ENCODE measurements at regions of chr5 and their contacts with region 1.

Region 1: DNA sequence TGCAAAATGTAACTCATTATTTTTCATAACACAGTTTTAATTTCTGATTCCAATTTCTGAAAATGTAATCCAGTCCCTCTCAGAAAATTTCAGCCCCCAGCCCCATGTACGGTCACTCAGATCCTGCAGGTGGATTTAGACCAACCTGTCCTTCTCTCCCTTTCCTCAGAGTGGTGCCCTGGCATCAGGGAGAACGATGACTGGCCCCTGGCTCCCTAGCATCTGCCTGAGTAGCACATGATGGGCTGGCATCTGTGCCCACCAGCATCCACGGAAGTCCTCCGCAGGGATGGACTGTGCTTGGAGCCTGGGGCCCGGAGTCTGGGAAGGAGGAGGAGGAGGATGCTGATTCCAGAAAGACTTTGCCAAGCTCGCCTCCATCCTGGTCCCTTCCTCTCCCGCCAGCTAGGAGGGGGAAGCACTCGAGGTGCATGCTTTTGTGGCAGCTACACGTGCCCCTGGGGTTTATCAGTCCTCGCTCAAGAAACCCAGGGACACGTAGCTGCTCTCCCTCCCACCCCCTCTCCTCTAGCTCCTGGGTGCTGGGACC is 54.4 kb upstream of the RUFY1 start:
- DNase-seq: peak in 2 of 3 donors; percentile 15 to 26
- H3K4me3 ChIP-seq: no peak overlapping the region
- H3K27ac ChIP-seq: no peak overlapping the region
- H3K4me1 ChIP-seq: no peaks in the 10 kb centered on the region
- H3K27me3 ChIP-seq: no peaks in the 10 kb centered on the region

Region 2: GRCh38 chr5:179166886-179167841 is 328.8 kb before region 1 on chr5:
- CTCF ChIA-PET with region 1: interaction called, 33 read pairs
- POLR2A ChIA-PET with region 1: no interaction called
- DNase-seq: peak; percentile 52 to 77 (median 73)
- H3K4me3 ChIP-seq: peak overlapping the region in 6 of 7 experiments; percentile 44 to 80 (median 60)
- H3K27ac ChIP-seq: no peak overlapping the region
- H3K4me1 ChIP-seq: peaks cover 0 to 9% (median 7%) of the 10 kb centered on the region in 4 experiments
- H3K27me3 ChIP-seq: peaks cover 0 to 12% (median 4%) of the 10 kb centered on the region in 5 experiments

Region 3: DNA sequence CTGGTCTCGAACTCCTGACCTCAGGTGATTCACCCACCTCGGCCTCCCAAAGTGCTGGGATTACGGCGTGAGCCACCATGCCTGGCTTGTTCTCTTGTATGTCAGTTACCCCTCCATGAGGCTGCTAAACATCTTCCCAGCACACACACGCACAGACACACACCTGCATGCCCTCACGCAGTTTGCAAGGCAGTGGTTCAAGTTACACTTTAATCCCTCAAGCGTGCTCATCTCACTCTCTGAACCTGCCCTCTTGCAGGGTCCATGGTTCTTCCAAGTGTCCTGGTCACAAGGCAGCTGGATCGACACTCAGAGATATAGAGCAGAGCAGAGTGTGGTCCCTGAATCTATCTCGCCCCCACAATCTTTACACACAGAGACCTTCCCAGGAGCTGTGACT is 20.2 kb after region 1 on chr5:
- CTCF ChIA-PET with region 1: no interaction called
- POLR2A ChIA-PET with region 1: no interaction called
- DNase-seq: no peak
- H3K4me3 ChIP-seq: no peak overlapping the region
- H3K27ac ChIP-seq: no peak overlapping the region
- H3K4me1 ChIP-seq: peaks cover 0 to 7% (median 3%) of the 10 kb centered on the region in 4 experiments
- H3K27me3 ChIP-seq: no peaks in the 10 kb centered on the region